Activated CD4-positive, alpha-beta memory T cell treated with anti-CD3 and anti-CD28 coated beads for 36 hours (primary cell): ENCODE measurements at regions of chr11 and their contacts with region 1.

Region 1: GRCh38 chr11:111982019-111982464 is 43.2 kb upstream of the DLAT start:
- DNase-seq: peak; percentile 72
- H3K4me3 Mint-ChIP-seq: no peak overlapping the region
- H3K27ac Mint-ChIP-seq: no peak overlapping the region
- H3K4me1 Mint-ChIP-seq: peaks cover 10% of the 10 kb centered on the region
- H3K27me3 Mint-ChIP-seq: peaks cover 18% of the 10 kb centered on the region

Region 2: DNA sequence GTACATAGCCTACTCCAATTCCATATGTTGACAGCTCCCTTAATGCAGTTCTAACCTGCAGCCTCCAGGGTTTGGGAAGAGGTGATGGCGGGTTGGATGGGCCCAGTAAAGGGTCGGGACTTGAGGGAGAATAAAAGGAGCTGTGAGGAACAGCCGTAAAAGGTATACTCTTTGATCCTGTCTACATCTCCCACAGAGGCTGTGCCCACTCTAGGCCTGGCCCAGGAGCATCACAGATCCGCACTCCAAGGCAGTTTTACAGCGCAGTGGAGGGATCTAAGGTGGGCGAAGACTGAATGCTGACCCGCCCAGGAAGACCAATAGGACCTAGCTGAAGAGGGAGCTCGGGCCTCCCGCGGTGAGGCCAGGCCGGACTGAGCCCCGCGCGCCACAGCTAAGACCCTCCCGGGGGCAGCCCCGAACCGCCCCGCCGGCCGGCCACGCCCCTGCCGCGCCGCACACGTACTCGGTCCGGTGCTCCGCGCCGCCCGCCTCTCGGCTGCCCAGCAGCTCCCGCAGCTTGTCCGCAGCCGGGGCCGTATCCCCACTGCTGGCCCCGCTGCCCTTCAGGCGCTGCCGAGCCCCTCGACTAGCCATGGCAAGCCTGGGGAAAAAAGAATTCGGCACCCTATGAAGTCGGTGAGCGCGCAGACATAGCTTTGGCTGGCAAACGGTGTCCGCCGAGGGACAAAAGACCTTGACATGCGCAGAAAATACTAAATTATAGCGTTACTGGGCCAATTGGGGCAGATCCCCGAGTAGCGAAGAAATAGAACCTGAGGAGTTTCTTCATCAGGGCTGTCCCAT is 111.0 kb before region 1 on chr11 and contains the start of gene ALG9:
- CTCF ChIA-PET with region 1: interaction called, 15 read pairs
- POLR2A ChIA-PET with region 1: no interaction called
- intact Hi-C with region 1: no loop called
- DNase-seq: peak; percentile 92
- H3K4me3 Mint-ChIP-seq: peak within 1 kb of the TSS; percentile 92
- H3K27ac Mint-ChIP-seq: peak within 1 kb of the TSS; percentile 86
- H3K4me1 Mint-ChIP-seq: peaks cover 24% of the 10 kb centered on the region
- H3K27me3 Mint-ChIP-seq: no peaks in the 10 kb centered on the region
- total RNA-seq, gene ALG9: 23.6 to 26.7 TPM

Region 3: GRCh38 chr11:111926505-111927391 is 55.3 kb before region 1 on chr11:
- CTCF ChIA-PET with region 1: interaction called, 190 read pairs
- POLR2A ChIA-PET with region 1: interaction called, 6 read pairs
- intact Hi-C with region 1: no loop called
- DNase-seq: peak; percentile 98
- H3K4me3 Mint-ChIP-seq: peak overlapping the region; percentile 84
- H3K27ac Mint-ChIP-seq: peak overlapping the region; percentile 86
- H3K4me1 Mint-ChIP-seq: peaks cover 13% of the 10 kb centered on the region
- H3K27me3 Mint-ChIP-seq: no peaks in the 10 kb centered on the region

Region 4: DNA sequence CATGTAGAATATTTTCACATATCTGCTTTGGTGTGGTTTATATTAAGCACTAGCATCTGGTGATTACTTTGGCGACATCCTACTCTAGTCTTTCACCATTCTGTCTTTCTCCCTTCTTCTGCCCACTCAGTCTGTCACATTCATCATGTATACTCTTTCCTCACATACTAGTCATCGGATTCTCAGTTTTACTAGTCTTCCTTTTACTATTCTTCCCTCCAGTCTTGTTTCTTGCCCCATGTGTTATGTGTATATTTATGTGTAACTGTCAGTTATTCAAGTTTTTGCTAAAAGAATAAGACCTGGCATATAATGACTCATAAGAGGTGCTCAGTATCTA is 49.5 kb before region 1 on chr11:
- CTCF ChIA-PET with region 1: interaction called, 190 read pairs
- POLR2A ChIA-PET with region 1: interaction called, 7 read pairs
- intact Hi-C with region 1: loop called (anchors 1 kb)
- DNase-seq: no peak
- H3K4me3 Mint-ChIP-seq: peak overlapping the region; percentile 53
- H3K27ac Mint-ChIP-seq: peak overlapping the region; percentile 87
- H3K4me1 Mint-ChIP-seq: peaks cover 32% of the 10 kb centered on the region
- H3K27me3 Mint-ChIP-seq: no peaks in the 10 kb centered on the region